ENCODE measurements at regions of chr6 and their contacts with region 1.

Region 1: DNA sequence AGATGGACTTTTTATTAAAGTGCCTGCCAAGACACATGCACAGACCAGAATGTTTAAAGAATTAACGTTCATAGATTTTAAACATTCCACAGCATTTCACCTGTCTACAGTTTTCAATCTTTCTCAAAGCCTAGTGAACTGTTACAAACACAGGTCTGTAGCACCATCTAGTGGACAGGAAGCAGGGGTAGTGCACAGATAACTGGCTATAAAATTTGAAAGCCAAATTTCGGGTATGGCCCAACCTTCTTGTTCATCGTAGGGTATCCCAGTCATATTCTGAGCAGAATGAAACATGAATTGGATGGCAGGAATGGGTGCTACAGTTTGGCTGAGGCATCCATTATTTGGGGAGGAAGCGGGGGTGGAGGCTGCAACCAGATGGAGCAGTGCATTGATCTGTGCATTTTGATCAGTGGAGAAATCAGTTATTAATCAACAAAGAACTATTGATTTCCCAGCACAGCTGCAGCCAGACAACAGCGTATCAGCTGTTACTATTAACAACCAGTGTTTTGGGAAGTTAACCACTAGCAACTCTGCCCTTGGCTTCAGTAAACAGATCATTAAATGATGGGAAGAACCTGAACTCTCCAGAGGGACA is 56.1 kb upstream of the B3GAT2 start:
- DNase-seq: peak; percentile 51
- ATAC-seq: peak; percentile 80
- H3K4me3 ChIP-seq: no peak overlapping the region
- H3K27ac ChIP-seq: no peak overlapping the region
- H3K4me1 ChIP-seq: no peaks in the 10 kb centered on the region
- H3K27me3 ChIP-seq: peaks cover 6% of the 10 kb centered on the region
- CTCF ChIP-seq: peak; percentile 75
- POLR2A ChIP-seq: no peak
- RAD21 ChIP-seq: peak; percentile 71

Region 2: DNA sequence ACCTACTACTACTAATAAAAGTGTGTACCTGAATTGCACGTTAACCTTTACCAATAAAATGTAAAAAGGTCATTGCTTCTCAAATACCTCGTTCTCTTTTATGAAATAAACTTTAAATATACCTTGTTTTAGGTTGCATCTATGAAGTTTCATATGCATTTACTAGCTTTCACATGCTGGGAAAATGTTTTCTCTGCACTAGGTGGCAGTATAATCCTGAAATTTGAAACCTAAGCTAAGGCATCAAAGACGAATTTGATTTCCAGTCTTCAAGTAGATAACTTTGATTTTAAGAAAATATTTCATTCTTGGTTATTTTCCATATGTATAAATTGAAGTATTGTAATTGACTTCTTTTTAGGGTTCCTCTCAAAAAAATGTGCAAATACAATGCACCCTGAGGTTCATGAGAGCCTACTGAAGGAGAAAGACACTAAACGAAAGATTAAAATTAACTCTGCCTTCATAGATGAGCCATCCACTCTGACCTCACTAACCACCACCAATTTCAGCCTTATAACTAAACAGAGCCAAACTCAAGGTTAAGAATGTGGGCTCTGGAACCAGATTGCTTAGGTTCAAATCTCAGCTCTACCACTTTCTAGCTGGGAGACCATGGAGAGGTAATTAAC is 702.8 kb before region 1 on chr6:
- CTCF ChIA-PET with region 1: interaction called, 3 read pairs
- POLR2A ChIA-PET with region 1: no interaction called
- dilution Hi-C with region 1: no loop called
- in situ Hi-C with region 1: loop called (anchors 10 kb)
- intact Hi-C with region 1: loop called (anchors 1 kb)
- DNase-seq: peak; percentile 53
- ATAC-seq: no peak; the same call in 1 of the 2 replicates
- H3K4me3 ChIP-seq: no peak overlapping the region
- H3K27ac ChIP-seq: no peak overlapping the region
- H3K4me1 ChIP-seq: no peaks in the 10 kb centered on the region
- H3K27me3 ChIP-seq: peaks cover 33% of the 10 kb centered on the region
- CTCF ChIP-seq: peak; percentile 73
- POLR2A ChIP-seq: no peak
- RAD21 ChIP-seq: peak; percentile 56

Region 3: GRCh38 chr6:70520575-70520974 is 492.4 kb before region 1 on chr6:
- CTCF ChIA-PET with region 1: no interaction called
- POLR2A ChIA-PET with region 1: no interaction called
- dilution Hi-C with region 1: no loop called
- in situ Hi-C with region 1: no loop called
- intact Hi-C with region 1: loop called (anchors 5 kb)
- DNase-seq: peak; percentile 18
- ATAC-seq: no peak
- H3K4me3 ChIP-seq: no peak overlapping the region
- H3K27ac ChIP-seq: no peak overlapping the region
- H3K4me1 ChIP-seq: no peaks in the 10 kb centered on the region
- H3K27me3 ChIP-seq: no peaks in the 10 kb centered on the region
- CTCF ChIP-seq: peak; percentile 49
- POLR2A ChIP-seq: no peak
- RAD21 ChIP-seq: peak; percentile 64

Region 4: DNA sequence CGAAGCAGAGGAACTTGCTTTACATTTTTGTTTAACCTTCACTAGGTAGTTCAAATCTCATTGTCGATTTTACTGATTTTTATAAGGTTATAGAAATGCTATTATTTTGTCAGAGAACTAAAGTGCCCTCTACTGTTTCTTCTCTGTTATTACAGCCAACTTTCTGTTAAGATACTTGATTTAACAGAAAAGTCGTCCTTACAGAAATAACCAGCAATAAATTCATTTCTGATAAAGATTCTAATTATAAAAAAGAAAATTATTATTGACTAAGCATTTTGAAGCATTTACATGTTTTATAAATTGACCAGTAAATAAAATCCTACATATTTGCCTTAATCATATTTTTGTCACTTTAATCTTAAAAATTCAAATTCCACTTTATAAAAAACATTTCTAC is 336.4 kb after region 1 on chr6:
- CTCF ChIA-PET with region 1: no interaction called
- POLR2A ChIA-PET with region 1: interaction called, 3 read pairs
- dilution Hi-C with region 1: no loop called
- in situ Hi-C with region 1: no loop called
- intact Hi-C with region 1: loop called (anchors 2 kb)
- DNase-seq: peak; percentile 62
- ATAC-seq: peak; percentile 65
- H3K4me3 ChIP-seq: no peak overlapping the region
- H3K27ac ChIP-seq: no peak overlapping the region
- H3K4me1 ChIP-seq: peaks cover 7% of the 10 kb centered on the region
- H3K27me3 ChIP-seq: no peaks in the 10 kb centered on the region
- CTCF ChIP-seq: peak; percentile 80
- POLR2A ChIP-seq: no peak
- RAD21 ChIP-seq: peak; percentile 73